Stomach (tissue), 19 donors: ENCODE measurements at regions of chr11 and their contacts with region 1.

Region 1: GRCh38 chr11:124983674-124984511 is 29.9 kb downstream of the CCDC15 start:
- DNase-seq: no peak
- H3K4me3 ChIP-seq: no peak overlapping the region
- H3K27ac ChIP-seq: no peak overlapping the region
- H3K4me1 ChIP-seq: no peaks in the 10 kb centered on the region
- H3K27me3 ChIP-seq: no peaks in the 10 kb centered on the region
- CTCF ChIP-seq: no peak
- EP300 ChIP-seq: no peak
- POLR2A ChIP-seq: no peak

Region 2: DNA sequence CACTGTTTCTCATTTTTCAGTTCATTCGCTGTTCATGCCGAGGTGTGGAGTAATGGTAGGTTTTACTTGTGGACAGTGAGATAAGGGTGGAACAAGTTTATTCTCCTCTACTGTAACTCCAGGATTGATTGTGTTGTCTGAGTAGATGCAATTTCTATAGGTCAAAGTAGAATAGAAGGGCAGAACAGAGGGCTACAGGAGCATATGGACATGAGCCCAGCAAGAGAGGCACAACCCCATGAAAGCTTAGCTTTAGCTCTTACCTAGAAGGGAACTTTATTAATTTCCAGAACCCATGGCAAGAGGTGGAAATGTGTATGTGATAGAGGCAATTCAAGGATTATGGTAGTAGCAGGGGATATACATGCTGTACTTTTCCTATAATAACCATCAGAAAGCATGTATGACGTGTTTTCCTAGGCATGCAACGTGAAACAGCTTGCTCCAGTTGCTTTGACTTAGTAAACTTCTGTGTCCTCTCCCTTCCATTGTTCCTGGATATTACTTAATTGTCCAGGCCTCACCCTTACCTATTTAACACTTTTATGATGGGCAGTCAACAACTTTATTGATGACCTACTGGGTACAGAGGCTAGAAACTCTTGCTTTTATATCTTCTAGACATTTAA is 65.4 kb after region 1 on chr11:
- intact Hi-C with region 1: loop called (anchors 10 kb)
- DNase-seq: no peak
- H3K4me3 ChIP-seq: no peak overlapping the region
- H3K27ac ChIP-seq: no peak overlapping the region
- H3K4me1 ChIP-seq: no peaks in the 10 kb centered on the region
- H3K27me3 ChIP-seq: no peaks in the 10 kb centered on the region
- CTCF ChIP-seq: no peak
- EP300 ChIP-seq: no peak
- POLR2A ChIP-seq: no peak